OCI-LY7 (cell line): ENCODE measurements at regions of chr7 and their contacts with region 1.

Region 1: DNA sequence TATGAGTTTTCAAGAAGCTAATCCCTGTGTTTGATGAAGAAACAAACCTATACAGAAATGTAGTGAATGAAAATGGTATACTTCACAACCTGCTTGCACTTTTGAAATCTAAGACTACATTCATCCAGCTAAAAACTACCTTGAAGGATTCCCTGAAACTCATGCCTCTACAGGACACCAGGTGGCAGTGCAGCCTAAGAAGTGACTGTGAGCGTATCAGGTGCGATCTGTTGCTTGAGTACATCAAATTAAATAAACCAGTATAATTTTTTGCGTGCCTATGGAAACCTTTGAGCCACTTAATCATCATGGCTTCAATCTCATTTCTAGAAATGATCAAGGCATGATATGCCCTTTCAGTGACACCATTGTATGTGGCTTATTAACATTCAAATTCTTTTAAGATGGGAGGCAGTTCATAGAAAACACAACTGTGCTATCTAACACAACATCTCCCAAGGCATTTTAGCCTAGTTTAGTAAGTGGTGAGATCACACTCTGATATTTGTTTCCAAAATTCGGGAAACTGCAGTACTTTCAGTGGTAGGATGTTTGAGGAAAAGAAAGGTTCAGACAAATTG is 57.4 kb downstream of the PPP1R17 start:
- DNase-seq: peak; percentile 60
- H3K4me3 ChIP-seq: no peak overlapping the region
- H3K27ac ChIP-seq: no peak overlapping the region
- H3K4me1 ChIP-seq: no peaks in the 10 kb centered on the region
- CTCF ChIP-seq: peak; percentile 88

Region 2: GRCh38 chr7:31705377-31705776 is 39.0 kb before region 1 on chr7:
- CTCF ChIA-PET with region 1: no interaction called
- POLR2A ChIA-PET with region 1: no interaction called
- intact Hi-C with region 1: no loop called
- DNase-seq: no peak
- H3K4me3 ChIP-seq: no peak overlapping the region
- H3K27ac ChIP-seq: no peak overlapping the region
- H3K4me1 ChIP-seq: no peaks in the 10 kb centered on the region
- CTCF ChIP-seq: no peak

Region 3: GRCh38 chr7:31729198-31729781 is 15.1 kb before region 1 on chr7:
- CTCF ChIA-PET with region 1: no interaction called
- POLR2A ChIA-PET with region 1: no interaction called
- intact Hi-C with region 1: no loop called
- DNase-seq: no peak
- H3K4me3 ChIP-seq: no peak overlapping the region
- H3K27ac ChIP-seq: no peak overlapping the region
- H3K4me1 ChIP-seq: no peaks in the 10 kb centered on the region
- CTCF ChIP-seq: peak; percentile 29; the same call in 1 of the 2 replicates

Region 4: DNA sequence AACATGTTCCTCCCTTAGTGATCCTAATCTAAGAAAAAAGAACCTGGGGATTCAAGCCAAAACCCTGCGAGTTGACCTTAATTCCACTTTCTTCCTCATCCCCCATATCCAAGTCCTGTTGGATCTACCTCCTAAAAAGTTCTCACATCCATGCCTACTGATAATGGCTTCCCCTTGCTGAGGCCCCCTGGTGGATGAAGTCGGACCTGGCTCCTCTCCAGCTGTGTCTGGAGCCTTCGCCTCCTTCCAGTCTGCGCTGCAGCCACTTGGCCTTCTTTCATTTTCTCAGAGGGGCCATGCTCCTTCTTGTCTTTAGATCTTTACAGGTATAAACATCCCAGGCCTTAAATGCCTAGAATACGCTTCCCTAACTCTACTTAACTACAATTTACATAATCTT is 317.8 kb after region 1 on chr7:
- CTCF ChIA-PET with region 1: no interaction called
- POLR2A ChIA-PET with region 1: no interaction called
- intact Hi-C with region 1: loop called (anchors 2 kb)
- DNase-seq: peak; percentile 10
- H3K4me3 ChIP-seq: no peak overlapping the region
- H3K27ac ChIP-seq: no peak overlapping the region
- H3K4me1 ChIP-seq: no peaks in the 10 kb centered on the region
- CTCF ChIP-seq: peak; percentile 76

Region 5: GRCh38 chr7:32204361-32205018 is 460.1 kb after region 1 on chr7:
- CTCF ChIA-PET with region 1: no interaction called
- POLR2A ChIA-PET with region 1: no interaction called
- intact Hi-C with region 1: loop called (anchors 10 kb)
- DNase-seq: peak; percentile 6
- H3K4me3 ChIP-seq: no peak overlapping the region
- H3K27ac ChIP-seq: no peak overlapping the region
- H3K4me1 ChIP-seq: no peaks in the 10 kb centered on the region
- CTCF ChIP-seq: 0 out of 2 replicates have a peak, but pooled peaks have one; percentile 38

Region 6: DNA sequence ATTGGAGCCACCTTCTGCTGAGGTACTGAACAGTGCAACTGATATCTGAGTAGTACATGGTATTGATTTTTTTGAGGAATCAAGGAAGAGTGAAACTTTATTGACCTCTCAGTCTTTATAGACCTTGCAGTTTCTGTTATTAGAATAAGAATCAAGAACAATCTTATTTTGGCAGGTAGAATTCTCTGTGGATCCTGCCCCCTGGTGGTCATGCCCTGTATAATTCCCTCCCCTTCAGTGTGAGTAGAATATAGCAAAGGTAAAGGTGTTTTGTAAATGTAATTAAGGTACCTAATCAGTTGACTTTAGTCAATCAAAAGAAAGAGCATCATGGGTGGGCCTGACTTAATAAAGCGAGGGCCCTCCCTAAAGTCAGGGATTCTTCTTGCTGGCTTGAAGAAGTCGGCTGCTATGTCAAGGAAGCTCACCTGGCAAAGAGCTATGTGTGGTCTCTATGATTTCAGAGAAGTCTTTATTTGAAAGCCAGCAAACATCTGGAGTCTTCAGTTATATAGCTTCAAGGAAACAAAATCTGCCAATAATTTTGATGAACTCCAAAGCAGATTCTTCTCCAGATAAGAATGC is 603.0 kb after region 1 on chr7:
- CTCF ChIA-PET with region 1: no interaction called
- POLR2A ChIA-PET with region 1: no interaction called
- intact Hi-C with region 1: loop called (anchors 2 kb)
- DNase-seq: peak; percentile 19
- H3K4me3 ChIP-seq: no peak overlapping the region
- H3K27ac ChIP-seq: no peak overlapping the region
- H3K4me1 ChIP-seq: no peaks in the 10 kb centered on the region
- CTCF ChIP-seq: peak; percentile 90